Activated CD8-positive, alpha-beta T cell treated with anti-CD3 and anti-CD28 coated beads for 36 hours (primary cell): ENCODE measurements at regions of chr20 and their contacts with region 1.

Region 1: GRCh38 chr20:36808317-36809257 is 35.0 kb upstream of the DSN1 start:
- DNase-seq: peak; percentile 88
- ATAC-seq: peak; percentile 77
- H3K4me3 Mint-ChIP-seq: no peak overlapping the region
- H3K27ac Mint-ChIP-seq: no peak overlapping the region
- H3K4me1 Mint-ChIP-seq: no peaks in the 10 kb centered on the region
- H3K27me3 Mint-ChIP-seq: no peaks in the 10 kb centered on the region
- CTCF ChIP-seq: peak; percentile 97

Region 2: GRCh38 chr20:36754656-36755222 is 53.8 kb before region 1 on chr20:
- CTCF ChIA-PET with region 1: interaction called, 11 read pairs
- POLR2A ChIA-PET with region 1: no interaction called
- intact Hi-C with region 1: no loop called
- DNase-seq: peak; percentile 41
- ATAC-seq: peak; percentile 83
- H3K4me3 Mint-ChIP-seq: no peak overlapping the region
- H3K27ac Mint-ChIP-seq: no peak overlapping the region
- H3K4me1 Mint-ChIP-seq: peaks cover 5% of the 10 kb centered on the region
- H3K27me3 Mint-ChIP-seq: no peaks in the 10 kb centered on the region
- CTCF ChIP-seq: peak; percentile 61

Region 3: DNA sequence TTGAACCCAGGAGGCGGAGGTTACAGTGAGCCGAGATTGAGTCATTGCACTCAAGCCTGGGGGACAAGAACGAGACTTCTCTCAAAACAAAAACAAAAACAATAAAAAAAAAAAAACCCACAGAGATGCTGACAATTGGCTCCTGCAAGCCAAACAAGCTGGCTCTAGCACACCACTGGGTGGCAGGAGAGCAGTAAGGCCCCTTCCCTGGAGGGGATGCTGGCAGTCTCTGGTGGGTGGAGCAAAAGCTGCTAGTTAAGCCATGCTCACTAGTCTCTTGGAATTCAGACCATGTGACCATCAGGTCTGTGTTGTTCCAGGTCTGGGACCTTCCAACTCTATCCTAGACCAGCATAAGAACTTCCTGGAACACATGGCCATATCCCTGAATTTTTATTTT is 16.2 kb before region 1 on chr20:
- CTCF ChIA-PET with region 1: interaction called, 28 read pairs
- POLR2A ChIA-PET with region 1: no interaction called
- intact Hi-C with region 1: no loop called
- DNase-seq: peak; percentile 26
- ATAC-seq: no peak
- H3K4me3 Mint-ChIP-seq: no peak overlapping the region
- H3K27ac Mint-ChIP-seq: no peak overlapping the region
- H3K4me1 Mint-ChIP-seq: no peaks in the 10 kb centered on the region
- H3K27me3 Mint-ChIP-seq: no peaks in the 10 kb centered on the region
- CTCF ChIP-seq: no peak

Region 4: GRCh38 chr20:36825385-36826104 is 17.0 kb after region 1 on chr20:
- CTCF ChIA-PET with region 1: interaction called, 15 read pairs
- POLR2A ChIA-PET with region 1: no interaction called
- intact Hi-C with region 1: no loop called
- DNase-seq: no peak
- ATAC-seq: no peak
- H3K4me3 Mint-ChIP-seq: no peak overlapping the region
- H3K27ac Mint-ChIP-seq: no peak overlapping the region
- H3K4me1 Mint-ChIP-seq: peaks cover 4% of the 10 kb centered on the region
- H3K27me3 Mint-ChIP-seq: no peaks in the 10 kb centered on the region
- CTCF ChIP-seq: no peak

Region 5: GRCh38 chr20:36881888-36882287 is 73.3 kb after region 1 on chr20:
- CTCF ChIA-PET with region 1: interaction called, 21 read pairs
- POLR2A ChIA-PET with region 1: no interaction called
- intact Hi-C with region 1: no loop called
- DNase-seq: peak; percentile 54
- ATAC-seq: peak; percentile 96
- H3K4me3 Mint-ChIP-seq: no peak overlapping the region
- H3K27ac Mint-ChIP-seq: no peak overlapping the region
- H3K4me1 Mint-ChIP-seq: peaks cover 11% of the 10 kb centered on the region
- H3K27me3 Mint-ChIP-seq: no peaks in the 10 kb centered on the region
- CTCF ChIP-seq: no peak

Region 6: DNA sequence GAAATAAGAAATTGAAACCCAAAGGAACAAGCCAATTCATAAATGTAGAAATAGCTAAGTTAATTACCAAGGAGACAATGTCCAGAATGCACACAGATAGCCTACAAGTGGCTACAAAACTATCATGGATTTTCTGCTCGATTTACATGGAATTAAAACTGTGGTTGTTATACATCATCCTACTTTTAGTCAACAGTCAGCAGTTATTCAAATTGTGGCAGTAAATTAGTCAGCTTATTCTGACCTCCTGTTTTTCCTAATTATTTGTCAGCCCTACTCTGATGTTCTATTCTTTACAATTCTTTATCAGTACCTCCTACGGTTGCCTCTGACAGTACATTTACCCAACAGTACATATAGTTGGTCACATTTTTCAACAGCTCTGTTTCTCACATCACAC is 257.6 kb after region 1 on chr20:
- CTCF ChIA-PET with region 1: no interaction called
- POLR2A ChIA-PET with region 1: no interaction called
- intact Hi-C with region 1: no loop called
- DNase-seq: no peak
- ATAC-seq: no peak
- H3K4me3 Mint-ChIP-seq: no peak overlapping the region
- H3K27ac Mint-ChIP-seq: no peak overlapping the region
- H3K4me1 Mint-ChIP-seq: peaks cover 6% of the 10 kb centered on the region
- H3K27me3 Mint-ChIP-seq: no peaks in the 10 kb centered on the region
- CTCF ChIP-seq: no peak

Region 7: GRCh38 chr20:37152284-37152683 is 343.7 kb after region 1 on chr20:
- CTCF ChIA-PET with region 1: no interaction called
- POLR2A ChIA-PET with region 1: no interaction called
- intact Hi-C with region 1: no loop called
- DNase-seq: no peak
- ATAC-seq: no peak
- H3K4me3 Mint-ChIP-seq: no peak overlapping the region
- H3K27ac Mint-ChIP-seq: no peak overlapping the region
- H3K4me1 Mint-ChIP-seq: no peaks in the 10 kb centered on the region
- H3K27me3 Mint-ChIP-seq: no peaks in the 10 kb centered on the region
- CTCF ChIP-seq: no peak